B cell (primary cell): ENCODE measurements at regions of chr17 and their contacts with region 1.

Region 1: GRCh38 chr17:79340333-79341221 is 266.0 kb downstream of the ENGASE start:
- DNase-seq: peak; percentile 89
- ATAC-seq: peak; percentile 81
- H3K4me3 ChIP-seq: peak overlapping the region; percentile 8 to 57 (median 47)
- H3K4me3 Mint-ChIP-seq: peak overlapping the region; percentile 94
- H3K27ac ChIP-seq: peak overlapping the region; percentile 75 to 88
- H3K27ac Mint-ChIP-seq: peak overlapping the region; percentile 93
- H3K4me1 ChIP-seq: peaks cover 38 to 49% of the 10 kb centered on the region in 2 donors
- H3K4me1 Mint-ChIP-seq: peaks cover 50% of the 10 kb centered on the region
- H3K27me3 ChIP-seq: no peaks in the 10 kb centered on the region
- H3K27me3 Mint-ChIP-seq: peaks cover 3% of the 10 kb centered on the region
- CTCF ChIP-seq: no peak

Region 2: DNA sequence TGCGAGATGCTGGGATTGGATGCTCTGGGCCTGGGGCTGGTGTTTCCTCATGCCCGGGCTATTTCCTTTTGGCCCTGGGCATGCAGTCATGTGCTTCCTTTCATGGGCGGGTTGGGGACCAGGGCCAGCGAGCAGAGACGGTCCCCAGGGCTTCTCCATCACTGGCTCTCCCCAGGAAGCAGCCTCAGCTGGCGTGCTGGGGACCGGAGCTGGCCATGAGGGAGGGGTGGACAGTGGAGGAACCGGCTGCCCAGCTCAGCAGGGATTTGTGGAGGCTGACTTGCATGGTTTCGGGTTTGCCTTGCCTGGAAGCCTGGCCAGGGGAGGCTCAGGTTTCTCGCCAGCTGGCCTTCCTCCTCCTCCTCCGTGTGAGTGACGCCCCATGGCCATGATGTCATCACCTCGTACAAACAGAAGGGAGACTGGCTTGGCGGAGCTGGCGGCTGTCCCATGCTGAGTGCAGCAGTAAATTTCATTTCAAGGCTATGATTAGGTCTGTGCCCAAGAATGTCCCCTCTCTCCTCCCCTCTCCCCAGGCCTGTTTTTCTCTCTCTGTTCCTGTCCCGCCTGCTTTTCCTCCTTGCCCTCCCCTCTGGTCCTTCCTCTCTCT is 406.5 kb before region 1 on chr17:
- CTCF ChIA-PET with region 1: no interaction called
- POLR2A ChIA-PET with region 1: interaction called, 10 read pairs
- intact Hi-C with region 1: no loop called
- DNase-seq: no peak
- ATAC-seq: no peak
- H3K4me3 ChIP-seq: no peak overlapping the region
- H3K4me3 Mint-ChIP-seq: no peak overlapping the region
- H3K27ac ChIP-seq: no peak overlapping the region
- H3K27ac Mint-ChIP-seq: no peak overlapping the region
- H3K4me1 ChIP-seq: peaks cover 0 to 8% of the 10 kb centered on the region in 2 donors
- H3K4me1 Mint-ChIP-seq: no peaks in the 10 kb centered on the region
- H3K27me3 ChIP-seq: peaks cover 0 to 7% (median 1%) of the 10 kb centered on the region in 4 experiments
- H3K27me3 Mint-ChIP-seq: peaks cover 12% of the 10 kb centered on the region
- CTCF ChIP-seq: no peak

Region 3: GRCh38 chr17:79294459-79295071 is 46.0 kb before region 1 on chr17:
- CTCF ChIA-PET with region 1: no interaction called
- POLR2A ChIA-PET with region 1: no interaction called
- intact Hi-C with region 1: loop called (anchors 10 kb)
- DNase-seq: peak; percentile 62
- ATAC-seq: no peak
- H3K4me3 ChIP-seq: no peak overlapping the region
- H3K4me3 Mint-ChIP-seq: no peak overlapping the region
- H3K27ac ChIP-seq: no peak overlapping the region
- H3K27ac Mint-ChIP-seq: no peak overlapping the region
- H3K4me1 ChIP-seq: no peaks in the 10 kb centered on the region
- H3K4me1 Mint-ChIP-seq: no peaks in the 10 kb centered on the region
- H3K27me3 ChIP-seq: peaks cover 0 to 18% (median 4%) of the 10 kb centered on the region in 4 experiments
- H3K27me3 Mint-ChIP-seq: peaks cover 46% of the 10 kb centered on the region
- CTCF ChIP-seq: no peak